ENCODE measurements at regions of chr3 and their contacts with region 1.

Region 1: DNA sequence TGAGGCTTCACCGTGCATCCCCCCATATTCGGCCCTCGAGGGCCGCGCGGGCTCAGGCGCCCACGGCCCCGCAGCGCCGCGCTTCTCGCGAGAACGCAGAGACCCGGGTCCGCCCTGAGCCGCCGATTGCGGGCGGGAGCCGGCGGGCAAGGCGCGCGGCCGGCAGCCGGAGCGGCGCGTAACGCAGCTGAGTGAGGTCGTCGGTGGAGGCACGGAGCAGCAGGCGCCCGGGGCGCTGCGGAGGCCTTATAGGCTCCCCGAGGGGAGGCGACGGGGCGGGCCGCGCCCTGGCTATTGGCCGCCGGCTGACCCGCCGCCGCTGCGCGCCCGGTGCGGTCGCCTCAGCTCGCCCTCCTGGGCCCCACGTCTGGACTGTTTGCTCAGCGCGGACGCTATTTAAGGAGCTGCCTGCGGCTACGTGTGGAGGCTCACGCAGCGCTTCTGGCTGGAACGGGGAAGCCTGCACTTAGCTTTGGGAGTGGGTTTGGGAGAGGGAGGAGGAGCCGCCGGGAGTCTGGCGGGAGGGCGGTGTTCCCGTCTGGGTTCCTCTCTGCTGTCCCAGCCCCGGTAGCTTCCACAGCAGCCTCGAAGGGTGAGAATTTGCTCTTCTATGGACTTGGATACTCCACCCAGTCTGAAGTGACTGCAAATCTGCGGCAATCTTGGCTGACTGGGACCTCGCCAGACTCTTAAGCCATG is at the start of gene PLOD2:
- DNase-seq: peak; percentile 92
- ATAC-seq: peak; percentile 94
- H3K4me3 ChIP-seq: peak within 1 kb of the TSS; percentile 94 to 96 (median 94)
- H3K27ac ChIP-seq: peak within 1 kb of the TSS; percentile 97
- H3K4me1 ChIP-seq: peaks cover 65% of the 10 kb centered on the region
- H3K27me3 ChIP-seq: no peaks in the 10 kb centered on the region; a peak in 1 of 5 replicates
- CTCF ChIP-seq: no peak; the same call in 1 of the 2 replicates
- EP300 ChIP-seq: peak in 1 of 2 experiments; percentile 71; a peak in 1 of 4 replicates
- POLR2A ChIP-seq: peak; percentile 96 to 99
- RAD21 ChIP-seq: no peak; the same call in 1 of the 2 replicates
- total RNA-seq, gene PLOD2: 65.4 and 107 TPM in 2 replicates

Region 2: DNA sequence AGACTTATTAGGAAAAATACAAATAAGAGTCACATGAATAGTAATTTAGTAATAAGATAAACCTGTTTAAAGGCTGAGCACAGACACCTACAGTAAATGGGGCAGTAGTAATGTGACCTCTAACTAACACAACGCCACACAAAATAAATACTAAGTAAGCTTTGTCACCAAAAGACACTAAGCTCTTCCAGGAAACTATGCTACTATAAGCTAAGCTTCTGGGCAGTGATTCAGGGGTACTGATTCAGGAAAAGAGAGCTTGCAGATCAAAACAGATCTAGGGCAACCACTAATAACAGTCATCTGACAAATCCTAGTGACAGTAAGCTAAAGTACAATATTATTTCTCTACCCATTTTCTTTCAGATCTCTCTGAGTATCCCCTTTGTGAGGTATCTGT is 68.9 kb before region 1 on chr3:
- CTCF ChIA-PET with region 1: no interaction called
- POLR2A ChIA-PET with region 1: interaction called, 17 read pairs
- in situ Hi-C with region 1: no loop called
- intact Hi-C with region 1: no loop called
- DNase-seq: peak; percentile 3
- ATAC-seq: peak; percentile 56
- H3K4me3 ChIP-seq: no peak overlapping the region
- H3K27ac ChIP-seq: no peak overlapping the region
- H3K4me1 ChIP-seq: peaks cover 36% of the 10 kb centered on the region
- H3K27me3 ChIP-seq: no peaks in the 10 kb centered on the region
- CTCF ChIP-seq: no peak
- EP300 ChIP-seq: no peak
- POLR2A ChIP-seq: no peak
- RAD21 ChIP-seq: no peak

Region 3: GRCh38 chr3:146117406-146118285 is 43.5 kb before region 1 on chr3:
- CTCF ChIA-PET with region 1: no interaction called
- POLR2A ChIA-PET with region 1: interaction called, 6 read pairs
- in situ Hi-C with region 1: no loop called
- intact Hi-C with region 1: loop called (anchors 2 kb)
- DNase-seq: no peak
- ATAC-seq: no peak
- H3K4me3 ChIP-seq: no peak overlapping the region
- H3K27ac ChIP-seq: no peak overlapping the region
- H3K4me1 ChIP-seq: peaks cover 40% of the 10 kb centered on the region
- H3K27me3 ChIP-seq: no peaks in the 10 kb centered on the region
- CTCF ChIP-seq: no peak
- EP300 ChIP-seq: no peak
- POLR2A ChIP-seq: no peak
- RAD21 ChIP-seq: no peak

Region 4: DNA sequence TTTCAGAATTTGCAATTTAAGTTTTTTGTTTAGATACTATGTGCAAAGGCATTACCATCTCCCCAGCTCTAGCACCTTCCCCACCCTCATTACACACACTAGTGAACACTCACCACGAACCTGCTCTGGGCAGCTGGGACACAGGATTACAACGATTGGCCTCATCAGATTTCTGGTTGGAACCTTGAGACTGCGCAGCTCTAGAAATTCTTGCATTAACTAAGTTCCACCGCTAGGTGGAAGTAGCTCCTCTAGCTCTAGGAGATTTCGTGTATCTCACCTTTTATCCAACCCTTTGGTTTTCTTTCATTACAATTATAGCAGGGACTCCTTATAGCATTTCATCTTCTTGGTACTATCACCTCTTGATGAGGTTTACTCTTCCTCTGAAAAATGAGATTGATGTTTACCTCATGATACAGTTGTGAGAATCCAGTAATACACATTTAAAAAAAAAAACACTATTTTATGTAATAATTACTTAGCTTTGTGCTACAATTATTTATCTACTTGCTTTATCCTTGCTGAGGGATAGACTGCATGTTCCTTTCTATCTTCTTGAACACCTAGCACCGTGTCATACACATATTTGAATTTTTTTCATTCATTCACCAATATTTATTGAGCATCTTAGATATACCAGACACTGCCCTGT is 28.5 kb after region 1 on chr3:
- CTCF ChIA-PET with region 1: no interaction called
- POLR2A ChIA-PET with region 1: interaction called, 10 read pairs
- in situ Hi-C with region 1: no loop called
- intact Hi-C with region 1: no loop called
- DNase-seq: peak; percentile 49
- ATAC-seq: peak; percentile 94
- H3K4me3 ChIP-seq: no peak overlapping the region
- H3K27ac ChIP-seq: no peak overlapping the region
- H3K4me1 ChIP-seq: no peaks in the 10 kb centered on the region
- H3K27me3 ChIP-seq: no peaks in the 10 kb centered on the region
- CTCF ChIP-seq: peak; percentile 80
- EP300 ChIP-seq: no peak
- POLR2A ChIP-seq: no peak
- RAD21 ChIP-seq: peak; percentile 56

Measured in HepG2 (cell line).